Activated T-helper 2 cell treated with anti-CD3 and anti-CD28 coated beads, Interferon-gamma antibody, Interleukin-2, Interleukin-4, amounts not matched to agents 10 μg/mL and 5 μg/mL and 100 μg/mL, durations not matched to agents 14 hours and 24 hours and 36 hours (primary cell): ENCODE measurements at regions of chr6 and their contacts with region 1.

Region 1: DNA sequence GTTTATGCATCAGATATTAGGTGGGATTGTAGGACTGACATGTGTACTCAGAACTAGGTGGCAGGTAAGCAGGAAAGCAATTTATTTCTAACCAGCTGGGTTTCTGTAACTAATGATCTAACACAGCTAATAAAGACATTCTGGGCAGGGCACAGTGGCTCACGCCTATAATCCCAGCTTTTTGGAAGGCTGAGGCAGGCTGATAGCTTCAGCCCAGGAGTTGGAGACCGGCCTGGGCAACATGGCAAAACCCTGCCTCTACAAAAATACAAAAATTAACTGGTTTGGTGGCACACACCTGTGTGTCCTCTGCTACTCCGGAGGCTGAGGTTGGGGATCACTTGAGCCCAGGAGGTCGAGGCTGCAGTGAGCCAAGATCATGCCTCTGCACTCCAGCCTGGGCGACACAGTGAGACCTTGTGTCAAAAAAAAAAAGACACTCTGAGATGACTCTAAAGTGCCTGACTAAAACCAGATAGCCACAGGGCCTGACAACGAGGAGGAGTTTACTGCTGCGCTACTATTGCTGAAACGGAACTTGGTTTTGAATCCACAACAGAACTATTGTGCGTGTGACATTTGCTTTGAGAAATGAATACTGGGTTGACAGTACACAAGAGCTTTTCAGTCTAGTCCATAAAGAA is 29.2 kb upstream of the CEP85L start:
- DNase-seq: no peak
- H3K4me3 Mint-ChIP-seq: peak overlapping the region; percentile 35
- H3K27ac Mint-ChIP-seq: peak overlapping the region; percentile 81
- H3K4me1 Mint-ChIP-seq: peaks cover 54% of the 10 kb centered on the region
- H3K27me3 Mint-ChIP-seq: no peaks in the 10 kb centered on the region

Region 2: GRCh38 chr6:118476551-118476950 is 204.0 kb before region 1 on chr6:
- intact Hi-C with region 1: no loop called
- DNase-seq: no peak
- H3K4me3 Mint-ChIP-seq: no peak overlapping the region
- H3K27ac Mint-ChIP-seq: no peak overlapping the region
- H3K4me1 Mint-ChIP-seq: no peaks in the 10 kb centered on the region
- H3K27me3 Mint-ChIP-seq: no peaks in the 10 kb centered on the region

Region 3: GRCh38 chr6:118663993-118664985 is 16.3 kb before region 1 on chr6:
- intact Hi-C with region 1: loop called (anchors 2 kb)
- DNase-seq: no peak
- H3K4me3 Mint-ChIP-seq: peak overlapping the region; percentile 86
- H3K27ac Mint-ChIP-seq: peak overlapping the region; percentile 96
- H3K4me1 Mint-ChIP-seq: peaks cover 58% of the 10 kb centered on the region
- H3K27me3 Mint-ChIP-seq: no peaks in the 10 kb centered on the region

Region 4: GRCh38 chr6:119020597-119021561 is 340.3 kb after region 1 on chr6:
- intact Hi-C with region 1: no loop called
- DNase-seq: no peak
- H3K4me3 Mint-ChIP-seq: no peak overlapping the region
- H3K27ac Mint-ChIP-seq: no peak overlapping the region
- H3K4me1 Mint-ChIP-seq: peaks cover 3% of the 10 kb centered on the region
- H3K27me3 Mint-ChIP-seq: no peaks in the 10 kb centered on the region